Activated CD4-positive, alpha-beta memory T cell treated with anti-CD3 and anti-CD28 coated beads for 36 hours (primary cell): ENCODE measurements at regions of chr13 and their contacts with region 1.

Region 1: DNA sequence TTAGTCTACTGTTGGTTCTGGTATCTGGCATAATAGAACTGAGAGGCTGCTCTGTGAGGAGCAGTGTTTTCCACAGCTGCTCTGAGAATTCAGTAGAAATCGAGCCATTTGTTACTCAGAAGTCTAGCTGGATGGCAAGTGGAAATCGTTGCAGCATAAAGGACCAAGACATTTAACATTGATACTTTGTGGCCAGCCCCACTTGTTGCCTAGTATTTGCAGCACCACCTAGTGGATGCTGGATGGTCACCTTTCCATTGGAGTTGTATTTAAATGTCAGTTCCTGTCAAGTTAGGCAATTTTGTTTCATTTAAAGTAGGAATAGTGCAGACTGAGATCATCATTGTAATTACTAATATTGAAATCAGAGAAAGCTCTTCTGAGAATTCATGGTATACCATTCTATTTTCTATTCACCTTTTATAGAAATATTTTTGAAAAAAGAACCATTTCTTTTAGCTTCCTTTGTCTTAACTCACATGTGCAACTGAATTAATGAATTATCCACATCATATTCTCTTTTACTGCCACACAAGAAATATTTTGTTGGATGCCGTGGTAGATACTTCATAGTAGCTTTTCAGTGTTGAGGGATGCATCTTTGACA is 64.6 kb downstream of the PDS5B start:
- DNase-seq: peak; percentile 78
- H3K4me3 Mint-ChIP-seq: no peak overlapping the region
- H3K27ac Mint-ChIP-seq: no peak overlapping the region
- H3K4me1 Mint-ChIP-seq: peaks cover 46% of the 10 kb centered on the region
- H3K27me3 Mint-ChIP-seq: no peaks in the 10 kb centered on the region

Region 2: GRCh38 chr13:32261567-32261966 is 389.2 kb before region 1 on chr13:
- CTCF ChIA-PET with region 1: no interaction called
- POLR2A ChIA-PET with region 1: no interaction called
- intact Hi-C with region 1: no loop called
- DNase-seq: no peak
- H3K4me3 Mint-ChIP-seq: no peak overlapping the region
- H3K27ac Mint-ChIP-seq: no peak overlapping the region
- H3K4me1 Mint-ChIP-seq: no peaks in the 10 kb centered on the region
- H3K27me3 Mint-ChIP-seq: no peaks in the 10 kb centered on the region

Region 3: GRCh38 chr13:32427852-32428580 is 222.8 kb before region 1 on chr13 and contains the start of gene N4BP2L1:
- CTCF ChIA-PET with region 1: no interaction called
- POLR2A ChIA-PET with region 1: no interaction called
- intact Hi-C with region 1: loop called (anchors 5 kb)
- DNase-seq: peak; percentile 94
- H3K4me3 Mint-ChIP-seq: peak within 1 kb of the TSS; percentile 88
- H3K27ac Mint-ChIP-seq: peak within 1 kb of the TSS; percentile 96
- H3K4me1 Mint-ChIP-seq: peaks cover 38% of the 10 kb centered on the region
- H3K27me3 Mint-ChIP-seq: no peaks in the 10 kb centered on the region
- total RNA-seq, gene N4BP2L1: 22.1 to 24.0 TPM

Region 4: DNA sequence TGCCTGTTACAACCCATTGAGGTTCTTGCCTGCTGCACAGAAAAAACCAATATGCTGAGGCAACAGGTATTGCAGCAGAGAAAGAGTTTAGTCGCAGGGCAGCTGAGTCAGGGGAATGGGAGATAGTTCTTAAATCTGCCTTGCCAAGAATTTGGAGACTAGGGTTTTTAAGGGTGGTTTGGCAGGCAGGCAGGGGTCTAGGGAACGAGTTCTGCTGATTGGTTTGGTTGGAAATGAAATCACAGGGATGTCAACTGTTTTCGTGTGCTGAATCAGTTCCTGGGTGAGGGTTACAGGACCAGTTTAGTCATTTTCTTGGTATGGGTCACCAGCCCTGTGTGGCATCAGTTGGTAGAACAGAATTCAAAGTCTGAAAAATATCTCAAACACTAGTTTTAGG is 28.0 kb before region 1 on chr13:
- CTCF ChIA-PET with region 1: interaction called, 8 read pairs
- POLR2A ChIA-PET with region 1: no interaction called
- intact Hi-C with region 1: loop called (anchors 2 kb)
- DNase-seq: peak; percentile 56
- H3K4me3 Mint-ChIP-seq: no peak overlapping the region
- H3K27ac Mint-ChIP-seq: peak overlapping the region; percentile 83
- H3K4me1 Mint-ChIP-seq: peaks cover 48% of the 10 kb centered on the region
- H3K27me3 Mint-ChIP-seq: no peaks in the 10 kb centered on the region

Region 5: DNA sequence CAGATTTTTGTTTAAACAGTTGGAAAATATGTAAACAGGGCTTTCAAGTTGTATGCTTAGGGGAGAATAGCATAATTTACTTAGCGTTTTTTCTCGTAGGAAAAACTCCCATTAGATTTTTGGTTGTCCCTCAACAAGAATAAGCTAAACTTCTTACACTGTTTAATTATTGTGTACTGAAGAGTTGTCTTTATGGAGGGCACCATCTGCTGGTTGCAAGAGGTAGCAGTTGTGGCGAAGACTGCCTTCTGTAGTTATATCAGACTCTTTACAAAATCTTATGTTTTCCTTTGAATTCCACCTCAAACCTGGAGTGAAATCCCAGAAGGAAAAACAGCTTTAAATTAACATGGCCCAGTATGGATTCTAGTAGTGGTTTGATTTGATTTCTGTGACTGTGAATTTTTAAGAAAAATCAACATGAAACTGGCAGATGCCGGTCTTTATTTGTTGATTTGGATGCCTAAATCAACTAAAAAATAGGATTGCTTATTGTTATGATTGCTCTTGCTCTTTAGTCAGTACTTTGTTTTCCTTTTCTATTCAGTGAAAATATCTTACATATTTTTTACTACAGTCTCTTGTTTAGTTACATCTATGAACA is 11.2 kb before region 1 on chr13:
- CTCF ChIA-PET with region 1: interaction called, 64 read pairs
- POLR2A ChIA-PET with region 1: interaction called, 5 read pairs
- intact Hi-C with region 1: loop called (anchors 1 kb)
- DNase-seq: peak; percentile 56
- H3K4me3 Mint-ChIP-seq: no peak overlapping the region
- H3K27ac Mint-ChIP-seq: no peak overlapping the region
- H3K4me1 Mint-ChIP-seq: peaks cover 41% of the 10 kb centered on the region
- H3K27me3 Mint-ChIP-seq: no peaks in the 10 kb centered on the region

Region 6: GRCh38 chr13:32669030-32669646 is 18.3 kb after region 1 on chr13:
- CTCF ChIA-PET with region 1: interaction called, 68 read pairs
- POLR2A ChIA-PET with region 1: interaction called, 3 read pairs
- intact Hi-C with region 1: loop called (anchors 1 kb)
- DNase-seq: no peak
- H3K4me3 Mint-ChIP-seq: no peak overlapping the region
- H3K27ac Mint-ChIP-seq: no peak overlapping the region
- H3K4me1 Mint-ChIP-seq: no peaks in the 10 kb centered on the region
- H3K27me3 Mint-ChIP-seq: no peaks in the 10 kb centered on the region